CD8-positive, alpha-beta memory T cell (primary cell): ENCODE measurements at regions of chr6 and their contacts with region 1.

Region 1: GRCh38 chr6:149545754-149546528 is at the start of gene PPIL4:
- DNase-seq: peak; percentile 94 to 98 (median 96)
- H3K4me3 ChIP-seq: peak within 1 kb of the TSS; percentile 100
- H3K4me3 Mint-ChIP-seq: peak within 1 kb of the TSS; percentile 98 to 100 (median 99)
- H3K27ac ChIP-seq: peak within 1 kb of the TSS; percentile 100
- H3K27ac Mint-ChIP-seq: peak within 1 kb of the TSS; percentile 99 to 100 (median 100)
- H3K4me1 ChIP-seq: peaks cover 34% of the 10 kb centered on the region
- H3K4me1 Mint-ChIP-seq: peaks cover 41 to 44% (median 44%) of the 10 kb centered on the region in 3 donors
- H3K27me3 ChIP-seq: no peaks in the 10 kb centered on the region
- H3K27me3 Mint-ChIP-seq: no peaks in the 10 kb centered on the region
- total RNA-seq, gene PPIL4: 29.7 to 31.9 TPM

Region 2: DNA sequence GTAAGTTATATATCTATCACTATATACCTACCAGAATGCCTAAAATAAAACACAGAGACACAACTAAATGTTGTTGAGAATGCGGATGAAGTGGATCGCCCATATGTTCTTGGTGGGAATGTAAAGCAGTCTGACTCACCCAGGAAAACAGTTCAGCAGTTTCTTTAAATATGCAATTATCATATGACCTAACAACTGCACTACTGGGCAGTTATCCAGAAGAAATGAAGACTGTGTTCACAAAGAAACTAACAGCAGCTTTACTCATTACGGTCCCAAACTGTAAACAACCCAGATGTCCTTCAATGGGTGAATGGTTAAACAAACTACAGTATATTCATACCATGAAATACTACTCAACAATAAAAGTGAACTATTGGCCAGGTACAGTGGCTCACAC is 46.9 kb before region 1 on chr6:
- CTCF ChIA-PET with region 1: no interaction called
- POLR2A ChIA-PET with region 1: interaction called, 10 read pairs
- DNase-seq: no peak
- H3K4me3 ChIP-seq: no peak overlapping the region
- H3K4me3 Mint-ChIP-seq: no peak overlapping the region
- H3K27ac ChIP-seq: no peak overlapping the region
- H3K27ac Mint-ChIP-seq: peak overlapping the region in 6 of 8 donors; percentile 3 to 70 (median 24)
- H3K4me1 ChIP-seq: peaks cover 32% of the 10 kb centered on the region
- H3K4me1 Mint-ChIP-seq: peaks cover 14 to 53% (median 40%) of the 10 kb centered on the region in 3 donors
- H3K27me3 ChIP-seq: no peaks in the 10 kb centered on the region
- H3K27me3 Mint-ChIP-seq: no peaks in the 10 kb centered on the region

Region 3: DNA sequence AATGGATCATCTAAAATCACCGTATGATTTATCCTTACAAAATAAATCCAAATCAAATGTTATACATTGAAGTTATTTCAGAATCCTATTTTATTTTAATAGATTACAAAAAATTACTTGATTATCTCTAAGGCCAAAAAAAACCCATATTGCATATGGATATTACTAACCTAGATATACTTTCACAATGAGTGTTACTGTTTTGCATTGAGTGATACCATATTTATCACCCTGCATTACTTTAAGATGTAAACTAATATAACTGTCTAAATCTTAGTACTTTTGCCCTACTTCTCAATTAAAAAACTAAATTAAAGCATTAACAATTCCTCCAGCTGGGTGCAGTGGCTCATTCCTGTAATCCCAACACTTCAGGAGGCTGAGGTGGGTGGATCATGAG is 11.2 kb before region 1 on chr6:
- CTCF ChIA-PET with region 1: interaction called, 11 read pairs
- POLR2A ChIA-PET with region 1: no interaction called
- DNase-seq: no peak
- H3K4me3 ChIP-seq: no peak overlapping the region
- H3K4me3 Mint-ChIP-seq: no peak overlapping the region
- H3K27ac ChIP-seq: no peak overlapping the region
- H3K27ac Mint-ChIP-seq: no peak overlapping the region
- H3K4me1 ChIP-seq: no peaks in the 10 kb centered on the region
- H3K4me1 Mint-ChIP-seq: peaks cover 8 to 19% (median 9%) of the 10 kb centered on the region in 3 donors
- H3K27me3 ChIP-seq: no peaks in the 10 kb centered on the region
- H3K27me3 Mint-ChIP-seq: no peaks in the 10 kb centered on the region

Region 4: DNA sequence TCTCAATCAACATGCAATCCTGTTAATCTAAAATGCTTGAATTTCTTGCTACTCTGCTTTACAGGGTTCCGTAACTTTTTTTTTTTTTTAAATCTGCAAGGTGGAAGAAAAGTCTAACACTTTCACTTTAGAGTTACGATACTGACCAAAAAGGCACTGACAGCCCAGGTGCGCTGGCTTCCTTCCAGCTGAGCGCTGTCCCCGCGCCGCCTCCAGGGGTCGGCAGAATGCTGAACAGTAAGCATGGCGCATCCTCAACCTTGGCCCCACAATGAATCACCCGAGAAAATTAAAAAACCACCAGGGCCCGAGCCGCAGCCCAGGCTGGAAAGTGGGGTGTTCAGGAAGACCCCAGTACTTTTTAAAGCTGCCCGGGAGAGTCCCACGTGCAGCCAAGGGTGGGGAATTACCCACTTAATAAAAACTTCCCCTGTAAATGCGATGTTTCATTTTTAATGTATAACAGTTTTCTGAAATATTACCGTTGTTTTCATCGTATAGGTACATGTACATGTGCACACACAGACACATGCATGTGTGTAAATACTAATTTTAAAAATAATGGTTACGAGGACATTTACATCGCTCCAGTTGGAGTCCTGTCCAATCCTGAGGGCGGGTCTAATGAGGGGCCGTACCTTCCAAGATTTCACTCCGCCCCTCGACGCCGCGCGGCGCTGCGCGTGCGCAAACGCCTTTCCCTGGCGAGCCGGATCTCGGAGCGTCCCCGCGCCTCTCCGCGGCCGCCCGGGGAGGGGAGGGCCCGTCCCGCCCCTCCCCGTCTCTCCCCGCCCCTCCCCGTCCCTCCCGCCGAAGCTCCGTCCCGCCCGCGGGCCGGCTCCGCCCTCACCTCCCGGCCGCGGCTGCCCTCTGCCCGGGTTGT is 19.8 kb after region 1 on chr6 and contains the start of gene GINM1:
- CTCF ChIA-PET with region 1: interaction called, 51 read pairs
- POLR2A ChIA-PET with region 1: interaction called, 13 read pairs
- DNase-seq: peak; percentile 90 to 96 (median 95)
- H3K4me3 ChIP-seq: peak within 1 kb of the TSS; percentile 97
- H3K4me3 Mint-ChIP-seq: peak within 1 kb of the TSS; percentile 91 to 99 (median 96)
- H3K27ac ChIP-seq: peak within 1 kb of the TSS; percentile 83
- H3K27ac Mint-ChIP-seq: peak within 1 kb of the TSS; percentile 92 to 98 (median 96)
- H3K4me1 ChIP-seq: peaks cover 16% of the 10 kb centered on the region
- H3K4me1 Mint-ChIP-seq: peaks cover 17 to 42% (median 25%) of the 10 kb centered on the region in 3 donors
- H3K27me3 ChIP-seq: no peaks in the 10 kb centered on the region
- H3K27me3 Mint-ChIP-seq: peaks cover 0 to 4% of the 10 kb centered on the region in 2 donors
- total RNA-seq, gene GINM1: 20.4 to 20.5 TPM

Region 5: DNA sequence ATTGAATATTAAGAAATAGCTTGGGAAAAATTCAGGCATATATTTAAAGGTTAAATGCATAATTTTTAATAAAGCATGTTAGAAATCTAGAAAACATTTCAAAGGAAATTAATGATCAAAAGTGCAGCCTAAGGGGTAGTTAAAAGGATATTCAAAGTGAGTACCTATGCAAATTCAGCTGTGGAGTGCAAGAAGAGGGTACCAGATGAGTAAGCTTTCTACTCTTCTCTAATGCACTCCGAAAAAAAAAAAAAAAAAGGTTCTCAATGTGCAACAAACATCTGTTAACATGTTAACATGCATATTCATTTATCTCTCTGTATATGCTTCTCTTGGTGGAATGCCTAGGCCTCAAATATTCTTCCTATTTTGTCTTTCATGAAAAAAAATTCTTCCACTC is 134.6 kb after region 1 on chr6:
- CTCF ChIA-PET with region 1: no interaction called
- POLR2A ChIA-PET with region 1: no interaction called
- DNase-seq: no peak
- H3K4me3 ChIP-seq: no peak overlapping the region
- H3K4me3 Mint-ChIP-seq: no peak overlapping the region
- H3K27ac ChIP-seq: no peak overlapping the region
- H3K27ac Mint-ChIP-seq: peak overlapping the region in 3 of 8 donors; percentile 22 to 57 (median 45)
- H3K4me1 ChIP-seq: no peaks in the 10 kb centered on the region
- H3K4me1 Mint-ChIP-seq: peaks cover 13 to 29% (median 25%) of the 10 kb centered on the region in 3 donors
- H3K27me3 ChIP-seq: no peaks in the 10 kb centered on the region
- H3K27me3 Mint-ChIP-seq: no peaks in the 10 kb centered on the region